CD4-positive, alpha-beta T cell (primary cell): ENCODE measurements at regions of chr2 and their contacts with region 1.

Region 1: DNA sequence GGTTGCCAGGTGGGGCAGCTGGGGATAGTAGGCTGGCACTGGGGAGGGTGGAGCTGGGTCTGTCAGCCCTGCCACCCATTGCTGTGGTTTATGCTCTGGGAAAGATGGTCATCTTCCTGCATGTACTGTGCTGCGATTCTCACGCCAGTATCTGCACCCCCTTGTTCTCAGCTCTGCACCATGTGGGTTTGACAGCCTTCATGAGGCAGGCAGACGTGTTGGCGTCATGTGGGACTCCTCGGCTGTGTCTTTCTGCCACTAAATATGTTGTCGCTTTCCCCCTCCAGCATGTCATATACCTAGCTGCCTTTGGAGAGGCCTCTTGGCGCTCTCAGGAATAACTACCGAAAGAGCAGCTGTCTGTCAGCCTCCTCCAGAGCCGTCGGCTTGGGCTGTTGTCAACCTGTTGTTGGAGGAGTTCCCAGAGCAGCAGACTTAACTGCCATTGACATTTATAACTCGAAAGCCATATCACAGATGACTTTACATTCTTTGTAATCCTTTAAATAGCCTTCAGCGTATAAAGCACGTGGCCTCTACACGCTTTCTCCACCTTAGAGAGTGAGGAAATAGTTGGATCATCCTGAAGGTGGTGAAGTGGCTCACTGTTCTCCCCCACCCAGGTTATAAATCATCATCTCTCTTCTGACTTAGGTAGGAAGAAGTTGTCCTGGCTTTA is 80.4 kb upstream of the MGAT5 start:
- DNase-seq: no peak
- ATAC-seq: peak; percentile 16
- H3K4me3 ChIP-seq: no peak overlapping the region
- H3K4me3 Mint-ChIP-seq: no peak overlapping the region
- H3K27ac ChIP-seq: no peak overlapping the region
- H3K27ac Mint-ChIP-seq: peak overlapping the region; percentile 72
- H3K4me1 ChIP-seq: peaks cover 55% of the 10 kb centered on the region
- H3K4me1 Mint-ChIP-seq: peaks cover 92% of the 10 kb centered on the region
- H3K27me3 ChIP-seq: no peaks in the 10 kb centered on the region
- H3K27me3 Mint-ChIP-seq: no peaks in the 10 kb centered on the region
- CTCF ChIP-seq: no peak

Region 2: GRCh38 chr2:133415210-133415876 is 758.1 kb before region 1 on chr2:
- CTCF ChIA-PET with region 1: no interaction called
- POLR2A ChIA-PET with region 1: no interaction called
- intact Hi-C with region 1: no loop called
- DNase-seq: no peak
- ATAC-seq: no peak
- H3K4me3 ChIP-seq: no peak overlapping the region
- H3K4me3 Mint-ChIP-seq: no peak overlapping the region
- H3K27ac ChIP-seq: no peak overlapping the region
- H3K27ac Mint-ChIP-seq: no peak overlapping the region
- H3K4me1 ChIP-seq: no peaks in the 10 kb centered on the region
- H3K4me1 Mint-ChIP-seq: no peaks in the 10 kb centered on the region
- H3K27me3 ChIP-seq: no peaks in the 10 kb centered on the region
- H3K27me3 Mint-ChIP-seq: no peaks in the 10 kb centered on the region
- CTCF ChIP-seq: no peak

Region 3: GRCh38 chr2:133941666-133942065 is 231.8 kb before region 1 on chr2:
- CTCF ChIA-PET with region 1: no interaction called
- POLR2A ChIA-PET with region 1: no interaction called
- intact Hi-C with region 1: no loop called
- DNase-seq: no peak
- ATAC-seq: no peak
- H3K4me3 ChIP-seq: no peak overlapping the region
- H3K4me3 Mint-ChIP-seq: no peak overlapping the region
- H3K27ac ChIP-seq: no peak overlapping the region
- H3K27ac Mint-ChIP-seq: no peak overlapping the region
- H3K4me1 ChIP-seq: no peaks in the 10 kb centered on the region
- H3K4me1 Mint-ChIP-seq: no peaks in the 10 kb centered on the region
- H3K27me3 ChIP-seq: peaks cover 3 to 8% of the 10 kb centered on the region in 2 experiments
- H3K27me3 Mint-ChIP-seq: peaks cover 35% of the 10 kb centered on the region
- CTCF ChIP-seq: no peak

Region 4: DNA sequence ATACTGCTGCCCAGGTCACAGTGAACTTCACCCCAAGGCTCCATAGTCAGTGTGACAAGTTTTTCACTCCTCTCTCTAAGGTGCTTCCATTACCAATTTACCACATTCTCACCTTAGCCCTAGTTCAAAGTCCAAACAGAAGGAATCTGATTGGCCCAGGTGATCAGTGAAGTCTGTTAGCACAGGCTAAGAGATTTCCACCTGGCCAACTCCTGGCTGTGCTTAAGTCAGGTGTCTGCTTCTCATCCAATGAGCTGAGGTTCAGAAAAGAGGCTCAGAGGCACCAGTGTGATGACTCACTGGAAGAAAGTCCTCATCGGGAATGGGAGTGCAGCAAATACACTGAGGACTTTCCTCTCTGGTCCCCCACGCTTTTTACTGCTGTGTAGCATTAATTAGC is 84.0 kb before region 1 on chr2:
- CTCF ChIA-PET with region 1: no interaction called
- POLR2A ChIA-PET with region 1: no interaction called
- intact Hi-C with region 1: no loop called
- DNase-seq: no peak
- ATAC-seq: no peak
- H3K4me3 ChIP-seq: no peak overlapping the region
- H3K4me3 Mint-ChIP-seq: no peak overlapping the region
- H3K27ac ChIP-seq: no peak overlapping the region
- H3K27ac Mint-ChIP-seq: no peak overlapping the region
- H3K4me1 ChIP-seq: no peaks in the 10 kb centered on the region
- H3K4me1 Mint-ChIP-seq: no peaks in the 10 kb centered on the region
- H3K27me3 ChIP-seq: no peaks in the 10 kb centered on the region
- H3K27me3 Mint-ChIP-seq: peaks cover 8% of the 10 kb centered on the region
- CTCF ChIP-seq: no peak

Region 5: GRCh38 chr2:134137182-134137611 is 36.3 kb before region 1 on chr2:
- CTCF ChIA-PET with region 1: no interaction called
- POLR2A ChIA-PET with region 1: no interaction called
- intact Hi-C with region 1: loop called in 1 of 2 experiments (anchors 5 kb)
- DNase-seq: peak in 1 of 14 experiments; percentile 13
- ATAC-seq: peak; percentile 57
- H3K4me3 ChIP-seq: no peak overlapping the region
- H3K4me3 Mint-ChIP-seq: peak overlapping the region; percentile 71
- H3K27ac ChIP-seq: no peak overlapping the region
- H3K27ac Mint-ChIP-seq: peak overlapping the region; percentile 78
- H3K4me1 ChIP-seq: peaks cover 67% of the 10 kb centered on the region
- H3K4me1 Mint-ChIP-seq: peaks cover 99% of the 10 kb centered on the region
- H3K27me3 ChIP-seq: no peaks in the 10 kb centered on the region
- H3K27me3 Mint-ChIP-seq: no peaks in the 10 kb centered on the region
- CTCF ChIP-seq: no peak

Region 6: DNA sequence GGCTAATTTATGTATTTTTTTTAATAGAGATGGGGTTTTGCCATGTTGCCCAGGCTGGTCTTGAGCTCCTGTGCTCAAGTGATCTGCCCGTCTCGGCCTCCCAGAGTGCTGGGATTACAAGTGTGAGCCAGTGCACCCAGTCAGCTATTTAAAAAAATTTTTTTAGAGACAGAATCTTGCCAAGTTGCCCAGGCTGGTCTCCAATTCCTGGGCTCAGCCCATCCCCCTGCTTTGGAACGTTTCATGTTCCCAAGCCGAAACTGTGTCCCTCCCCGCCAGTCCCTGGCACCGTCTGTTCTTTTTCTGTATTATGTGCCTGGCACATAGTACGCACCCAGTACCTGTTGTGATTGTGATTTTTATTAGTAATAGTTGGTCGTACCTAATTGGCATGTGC is 17.3 kb after region 1 on chr2:
- CTCF ChIA-PET with region 1: no interaction called
- POLR2A ChIA-PET with region 1: no interaction called
- intact Hi-C with region 1: no loop called
- DNase-seq: no peak
- ATAC-seq: no peak
- H3K4me3 ChIP-seq: no peak overlapping the region
- H3K4me3 Mint-ChIP-seq: no peak overlapping the region
- H3K27ac ChIP-seq: no peak overlapping the region
- H3K27ac Mint-ChIP-seq: no peak overlapping the region
- H3K4me1 ChIP-seq: peaks cover 53% of the 10 kb centered on the region
- H3K4me1 Mint-ChIP-seq: peaks cover 75% of the 10 kb centered on the region
- H3K27me3 ChIP-seq: no peaks in the 10 kb centered on the region
- H3K27me3 Mint-ChIP-seq: no peaks in the 10 kb centered on the region
- CTCF ChIP-seq: no peak